ENCODE measurements at regions of chr6 and their contacts with region 1.

Region 1: DNA sequence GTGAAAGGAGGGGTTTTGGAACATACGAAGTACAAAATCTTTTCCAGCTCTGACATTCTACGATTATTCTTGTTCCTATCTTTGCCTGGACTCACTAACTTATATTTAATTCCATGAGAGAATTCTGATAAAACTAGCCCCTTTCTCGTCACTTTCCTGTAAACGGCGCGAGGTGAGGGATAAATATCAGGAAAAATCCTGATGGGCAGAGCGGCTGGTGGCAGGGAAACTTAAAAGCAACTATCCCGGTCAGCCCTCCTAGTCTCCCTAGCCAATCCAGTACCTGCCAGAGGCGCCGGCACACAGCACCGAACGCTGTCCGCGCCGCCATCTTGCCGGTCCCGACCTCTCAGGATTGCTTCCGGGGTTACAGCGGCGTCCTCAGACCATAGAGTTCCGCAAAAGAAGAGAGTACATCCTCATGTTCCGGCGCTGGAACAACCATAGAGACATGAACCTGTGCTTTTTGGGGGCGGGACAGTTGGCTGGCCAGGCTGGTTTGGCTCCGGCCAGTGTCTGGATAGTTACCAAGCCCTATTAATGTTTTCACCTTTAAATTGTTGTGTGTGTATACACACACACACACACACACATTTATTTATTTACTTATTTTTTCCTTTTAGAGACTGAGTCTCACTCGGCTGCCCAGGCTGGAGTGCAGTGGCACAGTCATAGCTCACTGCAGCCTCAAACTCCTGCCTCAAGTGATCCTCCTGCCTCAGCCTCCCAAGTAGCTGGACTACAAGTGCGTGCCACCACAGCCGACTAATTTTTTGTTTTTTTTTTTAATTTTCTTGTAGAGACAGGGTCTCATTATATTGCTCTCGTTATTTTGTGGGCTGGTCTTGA is at the start of gene MRPS10:
- DNase-seq: peak; percentile 74
- ATAC-seq: peak; percentile 98
- H3K4me3 ChIP-seq: peak within 1 kb of the TSS; percentile 85
- H3K27ac ChIP-seq: peak within 1 kb of the TSS; percentile 65
- H3K4me1 ChIP-seq: peaks cover 5% of the 10 kb centered on the region; the same call in 1 of the 2 replicates
- H3K27me3 ChIP-seq: no peaks in the 10 kb centered on the region
- CTCF ChIP-seq: no peak
- EP300 ChIP-seq: 0 out of 4 replicates have a peak, but pooled peaks of 1 of the 2 experiments have one; percentile 14
- POLR2A ChIP-seq: peak; percentile 97
- RAD21 ChIP-seq: no peak
- polyA plus RNA-seq, gene MRPS10: 70.4 to 83.3 TPM

Region 2: DNA sequence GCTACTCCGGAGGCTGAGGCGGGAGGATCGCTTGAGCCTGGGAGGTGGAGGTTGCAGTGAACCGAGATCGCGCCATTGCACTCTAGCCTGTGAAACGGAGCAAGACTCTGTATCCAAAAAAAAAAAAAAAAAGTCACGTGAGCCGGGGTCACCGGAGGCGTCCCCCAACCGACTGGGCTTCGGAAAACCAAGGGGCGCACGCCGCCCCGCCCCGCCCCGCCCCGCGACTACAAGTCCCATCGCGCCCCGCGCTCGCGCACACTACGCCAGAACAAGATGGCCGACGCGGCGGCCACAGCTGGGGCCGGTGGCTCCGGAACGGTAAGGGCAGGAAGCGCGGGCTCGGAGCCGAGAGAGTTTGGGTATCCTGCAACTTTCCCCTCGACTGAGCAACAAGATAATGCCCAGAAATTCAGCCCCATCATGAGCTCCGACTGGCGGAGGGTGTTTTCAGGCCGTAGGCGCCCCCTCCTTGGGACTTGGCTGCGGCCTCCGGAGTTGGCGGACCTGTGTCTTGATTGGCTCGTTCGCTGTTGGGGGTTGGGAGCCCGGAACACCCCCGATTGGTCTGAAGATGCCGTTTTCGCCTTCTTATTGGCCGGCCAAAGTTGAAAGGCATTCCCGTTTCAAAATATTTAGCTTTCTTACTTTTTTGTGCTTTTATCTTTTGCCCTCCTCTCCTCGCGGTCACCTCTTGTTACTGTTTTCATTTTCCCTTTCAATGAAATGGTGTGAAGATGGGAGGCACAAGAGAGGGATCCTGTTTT is 167.3 kb before region 1 on chr6 and contains the start of gene TAF8:
- CTCF ChIA-PET with region 1: interaction called, 22 read pairs
- POLR2A ChIA-PET with region 1: interaction called, 7 read pairs
- RAD21 ChIA-PET with region 1: interaction called, 5 read pairs
- SMC1A ChIA-PET with region 1: interaction called, 3 read pairs
- in situ Hi-C with region 1: no loop called
- intact Hi-C with region 1: no loop called
- DNase-seq: peak; percentile 77
- ATAC-seq: peak; percentile 89
- H3K4me3 ChIP-seq: peak within 1 kb of the TSS; percentile 95
- H3K27ac ChIP-seq: peak within 1 kb of the TSS; percentile 97
- H3K4me1 ChIP-seq: peaks cover 28% of the 10 kb centered on the region
- H3K27me3 ChIP-seq: no peaks in the 10 kb centered on the region
- CTCF ChIP-seq: no peak
- EP300 ChIP-seq: no peak
- POLR2A ChIP-seq: peak; percentile 99
- RAD21 ChIP-seq: no peak
- polyA plus RNA-seq, gene TAF8: 17.5 to 25.5 TPM

Region 3: GRCh38 chr6:42075159-42075838 is 142.4 kb before region 1 on chr6:
- CTCF ChIA-PET with region 1: interaction called, 3 read pairs
- POLR2A ChIA-PET with region 1: no interaction called
- RAD21 ChIA-PET with region 1: interaction called, 3 read pairs
- SMC1A ChIA-PET with region 1: interaction called, 4 read pairs
- in situ Hi-C with region 1: no loop called
- intact Hi-C with region 1: loop called (anchors 1 kb)
- DNase-seq: no peak
- ATAC-seq: peak; percentile 68
- H3K4me3 ChIP-seq: no peak overlapping the region
- H3K27ac ChIP-seq: no peak overlapping the region
- H3K4me1 ChIP-seq: no peaks in the 10 kb centered on the region
- H3K27me3 ChIP-seq: no peaks in the 10 kb centered on the region
- CTCF ChIP-seq: peak; percentile 72 to 85 (median 81)
- EP300 ChIP-seq: no peak
- POLR2A ChIP-seq: no peak
- RAD21 ChIP-seq: peak; percentile 81

Region 4: DNA sequence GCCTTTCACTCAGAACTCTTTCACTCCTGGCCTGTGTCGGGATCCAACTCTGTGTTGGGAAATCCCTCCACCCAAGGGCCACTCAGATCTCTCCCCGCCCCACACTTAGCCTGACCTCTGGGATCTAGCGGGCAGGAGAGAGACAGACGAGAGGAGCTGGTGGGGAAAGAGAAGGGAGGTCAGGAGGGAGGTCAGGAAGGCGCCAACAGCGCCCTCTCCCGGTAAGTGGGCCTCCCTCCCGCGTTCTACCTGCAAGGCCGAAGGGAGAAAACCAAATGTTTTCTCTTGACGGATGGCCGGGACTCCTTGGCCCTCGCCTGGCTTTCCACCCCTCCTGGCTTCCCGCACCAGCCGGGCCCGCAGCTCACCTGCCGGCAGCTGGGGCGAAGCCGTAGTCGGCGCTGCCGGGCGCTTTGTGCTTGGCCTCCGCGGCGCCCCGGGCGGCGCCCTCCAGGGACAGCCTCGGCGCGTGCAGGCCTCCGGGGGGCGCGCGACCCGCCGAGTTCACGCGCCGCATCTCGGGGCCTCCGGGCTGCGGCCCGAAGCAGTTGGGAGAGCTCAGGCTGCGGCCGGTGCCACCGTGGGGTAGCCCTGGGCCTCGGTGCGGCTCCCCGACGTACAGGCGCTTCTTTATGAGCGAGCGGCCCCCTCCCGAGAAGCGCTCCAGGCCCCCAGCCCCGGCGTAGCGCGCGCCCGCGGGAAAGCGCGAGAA is 113.5 kb before region 1 on chr6:
- CTCF ChIA-PET with region 1: interaction called, 14 read pairs
- POLR2A ChIA-PET with region 1: no interaction called
- RAD21 ChIA-PET with region 1: interaction called, 7 read pairs
- SMC1A ChIA-PET with region 1: interaction called, 7 read pairs
- in situ Hi-C with region 1: no loop called
- intact Hi-C with region 1: no loop called
- DNase-seq: peak; percentile 15
- ATAC-seq: peak; percentile 90
- H3K4me3 ChIP-seq: peak overlapping the region; percentile 68; the same call in 1 of the 2 replicates
- H3K27ac ChIP-seq: no peak overlapping the region
- H3K4me1 ChIP-seq: no peaks in the 10 kb centered on the region
- H3K27me3 ChIP-seq: peaks cover 0 to 3% of the 10 kb centered on the region in 2 experiments; a peak in 1 of 4 replicates
- CTCF ChIP-seq: peak; percentile 64 to 86 (median 82)
- EP300 ChIP-seq: no peak
- POLR2A ChIP-seq: 0 out of 2 replicates have a peak, but pooled peaks have one; percentile 20
- RAD21 ChIP-seq: peak; percentile 38; the same call in 1 of the 2 replicates

Region 5: GRCh38 chr6:42230345-42231321 is 12.9 kb after region 1 on chr6:
- CTCF ChIA-PET with region 1: interaction called, 68 read pairs
- POLR2A ChIA-PET with region 1: interaction called, 6 read pairs
- RAD21 ChIA-PET with region 1: interaction called, 18 read pairs
- SMC1A ChIA-PET with region 1: interaction called, 49 read pairs
- in situ Hi-C with region 1: no loop called
- intact Hi-C with region 1: no loop called
- DNase-seq: no peak
- ATAC-seq: peak; percentile 79
- H3K4me3 ChIP-seq: no peak overlapping the region
- H3K27ac ChIP-seq: no peak overlapping the region
- H3K4me1 ChIP-seq: no peaks in the 10 kb centered on the region
- H3K27me3 ChIP-seq: no peaks in the 10 kb centered on the region
- CTCF ChIP-seq: peak; percentile 46 to 70 (median 54); a peak in 5 of 6 replicates
- EP300 ChIP-seq: no peak
- POLR2A ChIP-seq: no peak
- RAD21 ChIP-seq: peak; percentile 66

Measured in GM12878 (cell line).